ENCODE measurements at regions of chr7 and their contacts with region 1.

Region 1: GRCh38 chr7:45157653-45158401 is at the start of gene RAMP3:
- DNase-seq: no peak
- ATAC-seq: no peak
- H3K4me3 ChIP-seq: no peak within 1 kb of the TSS
- H3K27ac ChIP-seq: no peak within 1 kb of the TSS
- H3K4me1 ChIP-seq: no peaks in the 10 kb centered on the region
- H3K27me3 ChIP-seq: no peaks in the 10 kb centered on the region
- CTCF ChIP-seq: no peak
- total RNA-seq, gene RAMP3: not detected in 2 replicates

Region 2: GRCh38 chr7:45136106-45137060 is 21.4 kb before region 1 on chr7:
- CTCF ChIA-PET with region 1: no interaction called
- POLR2A ChIA-PET with region 1: no interaction called
- intact Hi-C with region 1: no loop called
- DNase-seq: peak; percentile 78
- ATAC-seq: peak; percentile 88
- H3K4me3 ChIP-seq: no peak overlapping the region
- H3K27ac ChIP-seq: no peak overlapping the region
- H3K4me1 ChIP-seq: no peaks in the 10 kb centered on the region; the same call in 1 of the 2 replicates
- H3K27me3 ChIP-seq: no peaks in the 10 kb centered on the region
- CTCF ChIP-seq: peak; percentile 90

Region 3: GRCh38 chr7:45259966-45260646 is 102.3 kb after region 1 on chr7:
- CTCF ChIA-PET with region 1: no interaction called
- POLR2A ChIA-PET with region 1: no interaction called
- intact Hi-C with region 1: loop called (anchors 1 kb)
- DNase-seq: peak; percentile 67
- ATAC-seq: peak; percentile 82
- H3K4me3 ChIP-seq: no peak overlapping the region
- H3K27ac ChIP-seq: no peak overlapping the region
- H3K4me1 ChIP-seq: peaks cover 11% of the 10 kb centered on the region; the same call in 1 of the 2 replicates
- H3K27me3 ChIP-seq: no peaks in the 10 kb centered on the region
- CTCF ChIP-seq: peak; percentile 97

Region 4: GRCh38 chr7:45663167-45663921 is 505.5 kb after region 1 on chr7:
- CTCF ChIA-PET with region 1: no interaction called
- POLR2A ChIA-PET with region 1: no interaction called
- intact Hi-C with region 1: loop called (anchors 5 kb)
- DNase-seq: peak; percentile 32
- ATAC-seq: peak; percentile 64
- H3K4me3 ChIP-seq: no peak overlapping the region
- H3K27ac ChIP-seq: no peak overlapping the region
- H3K4me1 ChIP-seq: no peaks in the 10 kb centered on the region
- H3K27me3 ChIP-seq: no peaks in the 10 kb centered on the region
- CTCF ChIP-seq: peak; percentile 65

Measured in PC-3 (cell line).